B cell (primary cell): ENCODE measurements at regions of chr3 and their contacts with region 1.

Region 1: DNA sequence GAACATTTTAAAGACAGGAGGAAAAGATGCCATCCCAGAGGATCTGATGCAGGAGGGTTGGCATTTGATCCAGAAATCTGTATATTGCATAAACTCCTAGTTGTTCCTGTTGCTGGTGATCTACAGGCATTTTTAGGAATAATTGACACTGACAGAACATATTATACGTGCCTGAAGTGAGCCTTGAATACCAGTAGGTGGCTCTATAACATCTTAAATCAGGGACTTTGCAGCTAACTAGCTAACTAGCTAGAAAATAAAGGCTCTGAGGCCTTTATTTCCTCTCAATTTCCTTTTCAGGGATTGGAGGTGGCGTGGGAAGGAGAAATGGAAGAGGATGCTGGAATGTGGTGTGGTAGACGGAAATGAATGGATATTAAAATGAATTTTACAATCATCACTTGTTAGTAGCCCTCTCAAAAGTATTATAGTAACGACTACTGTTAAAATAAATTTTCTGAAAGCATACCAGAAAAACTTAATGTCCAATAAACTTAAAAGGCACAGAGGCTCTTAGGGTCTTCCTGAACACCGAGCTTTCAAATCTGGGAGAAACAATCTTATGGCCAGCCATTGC is 73.9 kb upstream of the ZBED2 start:
- DNase-seq: peak; percentile 64
- ATAC-seq: peak; percentile 52
- H3K4me3 ChIP-seq: no peak overlapping the region
- H3K4me3 Mint-ChIP-seq: no peak overlapping the region
- H3K27ac ChIP-seq: no peak overlapping the region
- H3K27ac Mint-ChIP-seq: peak overlapping the region; percentile 57
- H3K4me1 ChIP-seq: peaks cover 29 to 34% of the 10 kb centered on the region in 2 donors
- H3K4me1 Mint-ChIP-seq: peaks cover 32% of the 10 kb centered on the region
- H3K27me3 ChIP-seq: no peaks in the 10 kb centered on the region
- H3K27me3 Mint-ChIP-seq: no peaks in the 10 kb centered on the region
- CTCF ChIP-seq: peak; percentile 91

Region 2: DNA sequence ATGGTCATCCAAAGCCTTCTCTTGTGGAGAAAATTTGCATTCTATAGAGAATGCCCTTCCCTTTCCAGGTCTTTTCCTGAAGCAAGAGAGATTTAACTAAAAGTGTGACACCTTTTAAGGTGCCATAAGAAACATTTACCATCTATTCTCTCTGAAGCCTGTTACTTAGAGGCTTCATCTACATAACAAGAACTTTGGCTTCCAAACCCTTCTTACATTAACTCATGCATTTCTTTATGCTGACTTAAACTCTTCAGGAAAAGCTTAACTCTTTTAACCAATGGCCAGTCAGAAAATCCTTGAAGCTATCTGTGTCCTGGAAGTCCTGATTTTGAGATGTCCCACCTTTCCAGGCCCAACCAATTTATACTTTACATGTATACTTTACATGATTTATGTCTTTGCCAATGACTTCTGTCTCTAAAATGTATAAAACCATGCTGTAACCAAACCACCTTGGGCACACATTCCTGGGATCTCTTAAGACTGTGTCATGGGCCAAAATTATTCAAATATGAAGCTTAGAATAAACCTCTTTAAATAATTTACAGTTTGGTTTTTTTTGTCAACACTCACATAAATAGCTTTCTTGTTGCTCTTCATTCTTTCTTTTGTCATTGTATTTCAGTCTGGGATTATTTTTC is 1070.0 kb before region 1 on chr3:
- CTCF ChIA-PET with region 1: no interaction called
- POLR2A ChIA-PET with region 1: no interaction called
- intact Hi-C with region 1: no loop called
- DNase-seq: no peak
- ATAC-seq: no peak
- H3K4me3 ChIP-seq: no peak overlapping the region
- H3K4me3 Mint-ChIP-seq: no peak overlapping the region
- H3K27ac ChIP-seq: no peak overlapping the region
- H3K27ac Mint-ChIP-seq: no peak overlapping the region
- H3K4me1 ChIP-seq: no peaks in the 10 kb centered on the region
- H3K4me1 Mint-ChIP-seq: no peaks in the 10 kb centered on the region
- H3K27me3 ChIP-seq: no peaks in the 10 kb centered on the region
- H3K27me3 Mint-ChIP-seq: no peaks in the 10 kb centered on the region
- CTCF ChIP-seq: no peak

Region 3: GRCh38 chr3:111376320-111376719 is 292.7 kb before region 1 on chr3:
- CTCF ChIA-PET with region 1: no interaction called
- POLR2A ChIA-PET with region 1: no interaction called
- intact Hi-C with region 1: no loop called
- DNase-seq: no peak
- ATAC-seq: no peak
- H3K4me3 ChIP-seq: no peak overlapping the region
- H3K4me3 Mint-ChIP-seq: no peak overlapping the region
- H3K27ac ChIP-seq: no peak overlapping the region
- H3K27ac Mint-ChIP-seq: no peak overlapping the region
- H3K4me1 ChIP-seq: no peaks in the 10 kb centered on the region
- H3K4me1 Mint-ChIP-seq: no peaks in the 10 kb centered on the region
- H3K27me3 ChIP-seq: peaks cover 0 to 6% (median 3%) of the 10 kb centered on the region in 4 experiments
- H3K27me3 Mint-ChIP-seq: peaks cover 19% of the 10 kb centered on the region
- CTCF ChIP-seq: no peak

Region 4: DNA sequence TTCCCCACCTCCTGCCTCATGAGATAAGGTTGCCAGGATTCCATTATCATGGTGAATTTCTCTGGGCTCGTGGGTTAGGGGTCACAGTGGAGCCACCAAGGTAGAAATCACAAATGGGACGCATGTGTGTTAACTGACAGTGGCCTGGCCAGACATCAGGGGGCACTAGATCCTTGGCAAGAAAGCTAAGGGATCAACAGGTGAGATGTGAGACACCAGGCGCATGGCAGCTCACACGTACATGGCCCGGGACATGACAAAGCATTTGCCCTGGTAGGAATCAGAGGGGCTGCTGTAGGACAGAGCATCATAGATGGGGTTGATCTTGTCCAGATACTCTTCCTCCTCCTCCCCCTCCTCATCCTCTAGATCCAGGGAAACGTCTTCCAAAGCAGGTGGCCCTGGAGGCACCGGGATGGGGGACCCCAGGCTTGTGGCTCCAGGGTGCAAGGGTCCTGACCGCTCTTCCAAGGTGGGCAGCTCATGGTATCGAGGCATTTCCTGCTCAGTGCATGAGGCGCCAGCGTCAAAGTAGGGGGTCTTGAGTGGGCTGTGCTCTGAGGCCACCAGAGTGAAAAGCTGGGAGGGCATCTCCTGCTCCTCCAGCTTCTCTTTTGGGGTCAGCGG is 98.5 kb before region 1 on chr3:
- CTCF ChIA-PET with region 1: no interaction called
- POLR2A ChIA-PET with region 1: no interaction called
- intact Hi-C with region 1: no loop called
- DNase-seq: no peak
- ATAC-seq: no peak
- H3K4me3 ChIP-seq: no peak overlapping the region
- H3K4me3 Mint-ChIP-seq: no peak overlapping the region
- H3K27ac ChIP-seq: no peak overlapping the region
- H3K27ac Mint-ChIP-seq: no peak overlapping the region
- H3K4me1 ChIP-seq: no peaks in the 10 kb centered on the region
- H3K4me1 Mint-ChIP-seq: peaks cover 2% of the 10 kb centered on the region
- H3K27me3 ChIP-seq: no peaks in the 10 kb centered on the region
- H3K27me3 Mint-ChIP-seq: no peaks in the 10 kb centered on the region
- CTCF ChIP-seq: no peak

Region 5: GRCh38 chr3:111594205-111594604 is 74.8 kb before region 1 on chr3:
- CTCF ChIA-PET with region 1: interaction called, 7 read pairs
- POLR2A ChIA-PET with region 1: no interaction called
- intact Hi-C with region 1: loop called (anchors 5 kb)
- DNase-seq: peak; percentile 25
- ATAC-seq: peak; percentile 74
- H3K4me3 ChIP-seq: no peak overlapping the region
- H3K4me3 Mint-ChIP-seq: peak overlapping the region; percentile 56
- H3K27ac ChIP-seq: peak overlapping the region; percentile 16 to 71
- H3K27ac Mint-ChIP-seq: peak overlapping the region; percentile 84
- H3K4me1 ChIP-seq: peaks cover 27 to 47% of the 10 kb centered on the region in 2 donors
- H3K4me1 Mint-ChIP-seq: peaks cover 58% of the 10 kb centered on the region
- H3K27me3 ChIP-seq: no peaks in the 10 kb centered on the region
- H3K27me3 Mint-ChIP-seq: no peaks in the 10 kb centered on the region
- CTCF ChIP-seq: no peak

Region 6: DNA sequence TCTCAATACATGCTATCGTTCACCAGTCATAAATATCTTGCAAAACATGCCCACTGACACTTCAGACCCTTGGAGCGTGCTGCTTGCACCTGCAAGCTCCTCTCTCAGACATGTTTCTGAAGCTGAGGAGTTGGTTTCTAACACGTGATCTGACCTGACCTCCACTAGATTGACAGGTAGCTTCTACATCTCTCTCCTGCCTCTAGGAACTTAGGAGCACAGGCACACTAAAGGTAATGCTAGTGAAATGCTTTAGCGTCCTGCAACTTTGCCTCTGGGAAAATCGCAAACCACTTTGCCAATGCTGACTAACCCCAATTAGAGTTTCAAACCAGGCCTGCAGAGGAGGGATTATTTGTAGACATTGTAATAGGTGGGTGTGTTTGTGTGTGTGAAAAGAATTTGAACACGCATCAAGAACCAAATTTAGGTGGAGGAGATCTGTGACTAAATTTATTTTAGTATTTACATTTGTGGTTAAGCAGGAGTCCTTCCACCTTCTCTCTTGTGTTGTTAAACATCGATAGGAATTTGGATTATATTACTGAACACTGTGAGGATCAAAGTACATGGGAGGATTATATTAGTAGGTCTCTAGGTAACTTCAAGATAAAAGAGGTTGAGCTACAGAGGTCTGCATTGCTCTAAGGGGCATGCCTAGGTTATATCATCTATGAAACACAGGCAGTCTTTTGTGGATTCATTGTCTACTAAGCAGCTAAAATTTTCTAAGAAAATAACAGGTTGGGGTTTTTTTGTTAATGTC is 12.8 kb after region 1 on chr3:
- CTCF ChIA-PET with region 1: interaction called, 13 read pairs
- POLR2A ChIA-PET with region 1: no interaction called
- intact Hi-C with region 1: no loop called
- DNase-seq: no peak
- ATAC-seq: no peak
- H3K4me3 ChIP-seq: no peak overlapping the region
- H3K4me3 Mint-ChIP-seq: no peak overlapping the region
- H3K27ac ChIP-seq: no peak overlapping the region
- H3K27ac Mint-ChIP-seq: no peak overlapping the region
- H3K4me1 ChIP-seq: peaks cover 20 to 26% of the 10 kb centered on the region in 2 donors
- H3K4me1 Mint-ChIP-seq: peaks cover 42% of the 10 kb centered on the region
- H3K27me3 ChIP-seq: no peaks in the 10 kb centered on the region
- H3K27me3 Mint-ChIP-seq: no peaks in the 10 kb centered on the region
- CTCF ChIP-seq: no peak

Region 7: DNA sequence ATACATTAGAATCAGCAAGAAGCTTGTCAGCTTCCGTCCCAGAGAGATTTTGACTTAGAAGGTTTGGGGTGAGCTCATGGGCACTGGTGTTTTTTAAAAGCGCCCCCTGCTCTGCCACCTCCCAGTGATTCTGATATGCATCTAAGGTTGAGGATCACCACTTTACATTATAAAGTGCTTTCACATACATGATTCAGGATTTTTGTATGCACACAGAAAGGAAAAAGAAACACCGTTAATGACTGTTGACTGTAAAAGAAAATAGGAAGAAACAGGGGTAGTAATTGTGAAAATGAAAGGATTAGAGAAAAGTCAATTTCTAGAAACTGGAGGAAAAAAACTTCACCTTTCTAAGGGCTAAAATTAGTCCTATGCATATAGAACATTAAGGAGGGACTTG is 31.1 kb after region 1 on chr3:
- CTCF ChIA-PET with region 1: interaction called, 10 read pairs
- POLR2A ChIA-PET with region 1: no interaction called
- intact Hi-C with region 1: no loop called
- DNase-seq: no peak
- ATAC-seq: no peak
- H3K4me3 ChIP-seq: no peak overlapping the region
- H3K4me3 Mint-ChIP-seq: no peak overlapping the region
- H3K27ac ChIP-seq: no peak overlapping the region
- H3K27ac Mint-ChIP-seq: no peak overlapping the region
- H3K4me1 ChIP-seq: peaks cover 3 to 6% of the 10 kb centered on the region in 2 donors
- H3K4me1 Mint-ChIP-seq: peaks cover 17% of the 10 kb centered on the region
- H3K27me3 ChIP-seq: no peaks in the 10 kb centered on the region
- H3K27me3 Mint-ChIP-seq: no peaks in the 10 kb centered on the region
- CTCF ChIP-seq: no peak

Region 8: DNA sequence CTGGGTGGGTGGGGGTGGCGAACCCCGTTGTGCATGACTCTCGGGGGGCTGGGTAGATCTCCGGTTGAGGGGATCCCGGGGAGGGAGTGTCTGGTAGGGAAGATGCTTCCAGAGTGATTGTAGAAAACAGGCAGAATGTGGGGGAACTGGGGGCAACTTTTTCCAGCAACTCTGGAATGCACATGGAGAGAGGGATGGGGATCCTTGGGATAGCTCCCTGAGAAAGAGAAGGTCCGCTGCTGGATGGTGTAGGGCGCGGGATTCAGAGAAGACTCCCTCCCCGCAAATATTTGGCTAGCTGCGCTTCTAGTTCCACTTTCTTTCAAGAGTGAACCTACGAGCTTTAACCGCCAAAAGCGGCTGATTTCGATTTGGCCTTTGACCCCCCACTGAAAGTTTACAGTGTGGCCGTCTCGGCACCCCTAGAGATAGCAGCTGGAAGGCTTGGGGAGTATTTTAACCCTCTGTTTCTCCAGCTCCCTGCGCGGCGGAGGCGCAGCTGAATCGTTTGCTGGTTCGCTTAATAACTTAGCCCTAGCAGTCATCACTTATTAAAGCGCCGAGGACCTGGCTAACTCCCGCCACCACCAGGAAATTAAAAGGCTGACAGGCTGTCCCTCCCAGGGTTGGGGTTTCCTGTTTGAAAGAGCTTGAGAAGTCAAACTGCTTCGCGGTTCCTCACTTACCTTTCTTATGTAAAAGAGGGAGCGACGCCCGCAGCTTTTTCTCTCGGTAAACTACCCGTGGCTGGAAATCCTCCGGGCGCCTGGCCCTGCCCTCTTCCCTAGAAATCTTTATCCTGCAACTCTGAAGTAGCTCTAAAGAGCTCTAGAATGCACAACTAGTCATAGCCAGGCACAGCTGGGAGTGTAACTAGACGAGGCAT is 191.2 kb after region 1 on chr3:
- CTCF ChIA-PET with region 1: interaction called, 22 read pairs
- POLR2A ChIA-PET with region 1: no interaction called
- intact Hi-C with region 1: no loop called
- DNase-seq: peak; percentile 85
- ATAC-seq: peak; percentile 72
- H3K4me3 ChIP-seq: peak overlapping the region; percentile 78 to 90 (median 87)
- H3K4me3 Mint-ChIP-seq: peak overlapping the region; percentile 93
- H3K27ac ChIP-seq: peak overlapping the region; percentile 56 to 76
- H3K27ac Mint-ChIP-seq: peak overlapping the region; percentile 80
- H3K4me1 ChIP-seq: peaks cover 11 to 18% of the 10 kb centered on the region in 2 donors
- H3K4me1 Mint-ChIP-seq: peaks cover 19% of the 10 kb centered on the region
- H3K27me3 ChIP-seq: peaks cover 0 to 14% (median 5%) of the 10 kb centered on the region in 4 experiments
- H3K27me3 Mint-ChIP-seq: peaks cover 14% of the 10 kb centered on the region
- CTCF ChIP-seq: peak; percentile 51

Region 9: DNA sequence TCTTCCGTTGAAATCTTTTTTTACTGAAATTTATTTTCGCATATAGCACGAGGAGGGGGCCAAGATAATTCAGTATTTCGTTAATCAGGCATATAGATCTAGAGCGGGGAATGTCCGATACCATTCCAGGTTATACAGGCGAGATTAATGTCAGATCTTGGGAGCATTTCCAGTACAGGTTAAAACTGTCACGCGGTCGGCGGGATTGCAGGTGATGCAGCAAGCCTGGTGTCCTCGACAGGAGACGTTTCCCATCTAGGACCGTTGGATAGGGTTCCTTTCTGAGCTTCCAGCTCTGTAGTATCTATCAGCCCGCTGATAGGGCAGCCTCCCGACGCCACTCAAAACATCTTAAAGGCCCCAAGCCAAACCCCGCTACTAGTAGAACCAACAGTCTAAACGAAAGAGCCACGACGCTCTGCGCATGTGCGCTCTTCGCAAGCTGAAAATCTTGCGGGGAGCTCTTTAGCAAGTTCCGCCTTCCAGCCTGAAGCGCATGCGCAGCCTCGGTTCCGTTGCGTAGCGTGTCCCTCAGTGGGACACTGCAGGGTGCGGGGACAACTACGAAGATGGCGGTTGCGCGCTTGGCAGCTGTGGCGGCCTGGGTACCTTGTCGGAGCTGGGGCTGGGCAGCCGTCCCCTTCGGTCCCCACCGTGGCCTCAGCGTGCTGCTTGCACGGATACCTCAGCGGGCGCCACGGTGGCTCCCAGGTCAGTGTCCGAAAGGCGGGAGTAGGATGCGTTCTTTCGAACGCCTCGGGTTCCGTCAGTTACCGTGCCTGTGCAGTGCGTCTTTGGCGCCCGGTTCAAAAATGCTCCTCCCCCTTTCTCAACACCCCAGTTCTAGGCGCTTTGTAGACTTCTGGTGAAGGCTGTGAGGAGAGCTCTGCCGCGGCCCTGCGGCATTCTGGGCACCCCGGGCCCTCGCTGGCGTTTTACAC is 309.8 kb after region 1 on chr3 and contains the start of gene ABHD10:
- CTCF ChIA-PET with region 1: interaction called, 6 read pairs
- POLR2A ChIA-PET with region 1: interaction called, 6 read pairs
- intact Hi-C with region 1: loop called (anchors 1 kb)
- DNase-seq: peak; percentile 98
- ATAC-seq: peak; percentile 94
- H3K4me3 ChIP-seq: peak within 1 kb of the TSS; percentile 84 to 95 (median 84)
- H3K4me3 Mint-ChIP-seq: peak within 1 kb of the TSS; percentile 91
- H3K27ac ChIP-seq: peak within 1 kb of the TSS; percentile 72 to 75
- H3K27ac Mint-ChIP-seq: peak within 1 kb of the TSS; percentile 92
- H3K4me1 ChIP-seq: peaks cover 26 to 29% of the 10 kb centered on the region in 2 donors
- H3K4me1 Mint-ChIP-seq: peaks cover 38% of the 10 kb centered on the region
- H3K27me3 ChIP-seq: no peaks in the 10 kb centered on the region
- H3K27me3 Mint-ChIP-seq: no peaks in the 10 kb centered on the region
- CTCF ChIP-seq: no peak
- total RNA-seq, gene ABHD10: 40.1 and 43.2 TPM in 2 replicates

Region 10: GRCh38 chr3:112128843-112129727 is 460.1 kb after region 1 on chr3:
- CTCF ChIA-PET with region 1: no interaction called
- POLR2A ChIA-PET with region 1: no interaction called
- intact Hi-C with region 1: loop called (anchors 5 kb)
- DNase-seq: peak; percentile 94
- ATAC-seq: peak; percentile 72
- H3K4me3 ChIP-seq: no peak overlapping the region
- H3K4me3 Mint-ChIP-seq: peak overlapping the region; percentile 50
- H3K27ac ChIP-seq: peak overlapping the region; percentile 93 to 98
- H3K27ac Mint-ChIP-seq: peak overlapping the region; percentile 91
- H3K4me1 ChIP-seq: peaks cover 76 to 90% of the 10 kb centered on the region in 2 donors
- H3K4me1 Mint-ChIP-seq: peaks cover 89% of the 10 kb centered on the region
- H3K27me3 ChIP-seq: no peaks in the 10 kb centered on the region
- H3K27me3 Mint-ChIP-seq: no peaks in the 10 kb centered on the region
- CTCF ChIP-seq: no peak

Region 11: DNA sequence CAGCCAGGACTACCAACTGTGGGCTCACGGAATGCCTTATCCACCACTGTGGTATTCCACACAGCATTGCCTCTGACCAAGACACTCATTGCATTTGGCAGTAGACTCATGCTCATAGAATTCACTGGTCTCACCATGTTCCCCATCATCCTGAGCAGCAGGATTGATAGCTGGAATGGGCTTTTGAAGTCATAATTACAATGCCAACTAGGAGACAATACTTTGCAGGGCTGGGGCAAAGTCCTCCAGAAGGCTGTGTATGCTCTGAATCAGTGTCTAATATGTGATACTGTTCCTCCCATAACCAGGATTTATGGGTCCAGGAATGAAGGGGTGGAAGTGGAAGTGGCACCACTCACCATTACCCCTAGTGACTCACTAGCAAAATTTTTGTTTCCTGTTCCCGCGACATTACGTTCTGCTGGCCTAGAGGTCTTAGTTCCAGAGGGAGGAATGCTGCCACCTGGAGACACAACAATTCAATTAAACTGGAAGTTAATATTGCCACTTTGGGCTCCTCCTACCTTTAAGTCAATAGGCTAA is 1030.5 kb after region 1 on chr3:
- CTCF ChIA-PET with region 1: no interaction called
- POLR2A ChIA-PET with region 1: no interaction called
- intact Hi-C with region 1: no loop called
- DNase-seq: no peak
- ATAC-seq: no peak
- H3K4me3 ChIP-seq: no peak overlapping the region
- H3K4me3 Mint-ChIP-seq: no peak overlapping the region
- H3K27ac ChIP-seq: no peak overlapping the region
- H3K27ac Mint-ChIP-seq: no peak overlapping the region
- H3K4me1 ChIP-seq: no peaks in the 10 kb centered on the region
- H3K4me1 Mint-ChIP-seq: no peaks in the 10 kb centered on the region
- H3K27me3 ChIP-seq: no peaks in the 10 kb centered on the region
- H3K27me3 Mint-ChIP-seq: peaks cover 25% of the 10 kb centered on the region
- CTCF ChIP-seq: no peak